ENCODE measurements at regions of chr6 and their contacts with region 1.

Region 1: GRCh38 chr6:150068720-150069648 is at the start of gene ULBP3:
- DNase-seq: peak; percentile 89
- ATAC-seq: peak; percentile 87
- H3K4me3 ChIP-seq: peak within 1 kb of the TSS; percentile 81 to 92
- H3K27ac ChIP-seq: peak within 1 kb of the TSS; percentile 53
- H3K4me1 ChIP-seq: peaks cover 20 to 49% of the 10 kb centered on the region in 2 experiments
- H3K27me3 ChIP-seq: no peaks in the 10 kb centered on the region
- CTCF ChIP-seq: peak in 2 of 3 experiments; percentile 60 to 72; a peak in 4 of 6 replicates
- POLR2A ChIP-seq: peak; percentile 83
- RAD21 ChIP-seq: no peak
- total RNA-seq, gene ULBP3: 18.4 TPM

Region 2: GRCh38 chr6:149934249-149935156 is 134.5 kb before region 1 on chr6:
- CTCF ChIA-PET with region 1: interaction called, 4 read pairs
- POLR2A ChIA-PET with region 1: no interaction called
- RAD21 ChIA-PET with region 1: no interaction called
- intact Hi-C with region 1: loop called (anchors 1 kb)
- DNase-seq: peak; percentile 76
- ATAC-seq: peak; percentile 67
- H3K4me3 ChIP-seq: no peak overlapping the region
- H3K27ac ChIP-seq: no peak overlapping the region
- H3K4me1 ChIP-seq: peaks cover 0 to 3% of the 10 kb centered on the region in 2 experiments; a peak in 1 of 4 replicates
- H3K27me3 ChIP-seq: no peaks in the 10 kb centered on the region
- CTCF ChIP-seq: peak; percentile 63 to 88 (median 87)
- POLR2A ChIP-seq: no peak
- RAD21 ChIP-seq: peak; percentile 96

Region 3: DNA sequence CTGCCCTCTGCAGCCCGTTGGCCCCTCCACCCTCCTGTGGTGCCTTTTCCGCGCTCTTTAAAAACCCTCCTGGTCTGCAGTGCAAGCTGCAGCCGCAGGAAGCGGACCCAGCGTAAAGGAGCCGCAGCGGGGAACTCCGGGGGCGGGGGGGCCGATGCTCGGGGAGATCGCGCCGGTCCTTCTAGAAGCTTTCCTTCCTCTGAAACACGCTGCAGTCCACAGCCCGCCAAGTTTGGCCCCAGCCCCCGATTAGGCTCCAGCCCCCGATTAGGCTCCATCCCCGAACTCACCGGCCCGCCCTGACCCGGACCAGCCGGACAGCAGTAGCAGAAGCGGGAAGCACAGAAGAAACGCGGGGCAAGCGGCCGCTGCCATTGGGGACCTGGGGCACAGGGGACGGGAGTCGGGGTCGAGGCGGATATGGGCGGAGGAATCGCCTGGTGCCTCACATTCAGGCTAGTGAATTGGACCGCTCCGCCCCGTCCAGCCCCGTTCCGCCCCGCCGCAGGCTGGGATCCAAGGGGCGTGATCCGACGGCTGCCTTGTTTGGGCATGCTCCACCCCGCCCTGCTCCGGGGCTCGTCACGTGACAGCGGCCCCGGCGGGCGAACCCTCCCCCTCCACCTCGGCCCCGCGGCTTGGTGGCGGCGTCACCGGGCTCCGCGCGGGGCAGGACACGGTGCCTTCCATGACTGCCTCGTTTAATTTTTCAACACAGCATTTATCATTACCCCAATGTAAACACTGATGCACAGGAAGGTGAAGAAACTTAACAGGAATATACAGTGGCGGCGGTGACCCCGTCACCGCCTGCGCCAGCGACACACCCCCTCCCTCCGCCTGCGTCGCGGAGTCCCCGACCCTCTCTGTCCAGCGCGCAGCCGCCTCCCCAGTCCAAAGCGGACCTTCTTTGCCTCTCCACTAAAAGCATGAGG is 63.9 kb before region 1 on chr6:
- CTCF ChIA-PET with region 1: interaction called, 3 read pairs
- POLR2A ChIA-PET with region 1: interaction called, 3 read pairs
- RAD21 ChIA-PET with region 1: no interaction called
- intact Hi-C with region 1: loop called (anchors 5 kb)
- DNase-seq: peak; percentile 81
- ATAC-seq: peak; percentile 93
- H3K4me3 ChIP-seq: peak overlapping the region; percentile 81 to 91
- H3K27ac ChIP-seq: peak overlapping the region; percentile 57
- H3K4me1 ChIP-seq: peaks cover 18 to 33% of the 10 kb centered on the region in 2 experiments
- H3K27me3 ChIP-seq: no peaks in the 10 kb centered on the region
- CTCF ChIP-seq: no peak
- POLR2A ChIP-seq: peak; percentile 36
- RAD21 ChIP-seq: no peak

Region 4: DNA sequence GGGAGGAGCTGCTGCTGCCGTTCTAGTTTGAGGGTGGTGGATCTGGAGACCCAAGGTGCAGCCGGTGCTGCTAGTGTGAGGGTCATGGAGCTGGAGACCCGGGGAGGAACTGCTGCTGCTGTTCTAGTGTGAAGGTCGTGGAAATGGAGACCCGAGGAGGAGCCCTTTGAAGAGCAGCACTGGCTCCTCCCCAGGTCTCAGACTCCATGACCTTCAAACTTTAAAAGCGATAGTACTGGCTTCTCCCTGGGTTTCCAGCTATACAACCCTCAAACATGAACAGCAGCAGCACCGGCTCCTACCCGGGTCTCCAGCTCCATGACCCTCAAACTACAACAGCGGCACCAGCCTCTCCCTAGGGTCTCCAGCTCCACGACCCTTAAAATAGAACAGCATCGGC is 15.5 kb before region 1 on chr6:
- CTCF ChIA-PET with region 1: interaction called, 11 read pairs
- POLR2A ChIA-PET with region 1: interaction called, 4 read pairs
- RAD21 ChIA-PET with region 1: no interaction called
- intact Hi-C with region 1: no loop called
- DNase-seq: no peak
- ATAC-seq: no peak
- H3K4me3 ChIP-seq: no peak overlapping the region
- H3K27ac ChIP-seq: no peak overlapping the region
- H3K4me1 ChIP-seq: no peaks in the 10 kb centered on the region
- H3K27me3 ChIP-seq: peaks cover 15% of the 10 kb centered on the region; the same call in 1 of the 2 replicates
- CTCF ChIP-seq: no peak
- POLR2A ChIP-seq: no peak
- RAD21 ChIP-seq: no peak

Region 5: GRCh38 chr6:150079604-150080003 is 10.6 kb after region 1 on chr6:
- CTCF ChIA-PET with region 1: interaction called, 48 read pairs
- POLR2A ChIA-PET with region 1: interaction called, 4 read pairs
- RAD21 ChIA-PET with region 1: interaction called in 1 of 2 experiments, 4 read pairs
- intact Hi-C with region 1: no loop called
- DNase-seq: no peak
- ATAC-seq: no peak
- H3K4me3 ChIP-seq: no peak overlapping the region
- H3K27ac ChIP-seq: no peak overlapping the region
- H3K4me1 ChIP-seq: peaks cover 2 to 20% of the 10 kb centered on the region in 2 experiments; a peak in 3 of 4 replicates
- H3K27me3 ChIP-seq: no peaks in the 10 kb centered on the region
- CTCF ChIP-seq: no peak
- POLR2A ChIP-seq: no peak
- RAD21 ChIP-seq: no peak

Region 6: GRCh38 chr6:150220634-150221551 is 151.9 kb after region 1 on chr6:
- CTCF ChIA-PET with region 1: no interaction called
- POLR2A ChIA-PET with region 1: no interaction called
- RAD21 ChIA-PET with region 1: no interaction called
- intact Hi-C with region 1: no loop called
- DNase-seq: no peak
- ATAC-seq: no peak
- H3K4me3 ChIP-seq: no peak overlapping the region
- H3K27ac ChIP-seq: no peak overlapping the region
- H3K4me1 ChIP-seq: no peaks in the 10 kb centered on the region
- H3K27me3 ChIP-seq: no peaks in the 10 kb centered on the region
- CTCF ChIP-seq: no peak
- POLR2A ChIP-seq: no peak
- RAD21 ChIP-seq: no peak

Region 7: GRCh38 chr6:150395398-150396009 is 326.5 kb after region 1 on chr6:
- CTCF ChIA-PET with region 1: interaction called, 37 read pairs
- POLR2A ChIA-PET with region 1: interaction called, 8 read pairs
- RAD21 ChIA-PET with region 1: no interaction called
- intact Hi-C with region 1: loop called (anchors 1 kb)
- DNase-seq: peak; percentile 49
- ATAC-seq: peak; percentile 97
- H3K4me3 ChIP-seq: no peak overlapping the region
- H3K27ac ChIP-seq: no peak overlapping the region
- H3K4me1 ChIP-seq: peaks cover 0 to 3% of the 10 kb centered on the region in 2 experiments; a peak in 1 of 4 replicates
- H3K27me3 ChIP-seq: no peaks in the 10 kb centered on the region
- CTCF ChIP-seq: peak; percentile 69 to 89 (median 83)
- POLR2A ChIP-seq: no peak
- RAD21 ChIP-seq: peak; percentile 95

Region 8: GRCh38 chr6:150417899-150418826 is 349.2 kb after region 1 on chr6:
- CTCF ChIA-PET with region 1: interaction called, 6 read pairs
- POLR2A ChIA-PET with region 1: interaction called, 3 read pairs
- RAD21 ChIA-PET with region 1: interaction called in 1 of 2 experiments, 3 read pairs
- intact Hi-C with region 1: loop called (anchors 5 kb)
- DNase-seq: peak; percentile 88
- ATAC-seq: peak; percentile 83
- H3K4me3 ChIP-seq: peak overlapping the region; percentile 13 to 50
- H3K27ac ChIP-seq: peak overlapping the region; percentile 40; the same call in 1 of the 2 replicates
- H3K4me1 ChIP-seq: peaks cover 13 to 20% of the 10 kb centered on the region in 2 experiments
- H3K27me3 ChIP-seq: no peaks in the 10 kb centered on the region
- CTCF ChIP-seq: peak; percentile 80 to 88 (median 83)
- POLR2A ChIP-seq: no peak
- RAD21 ChIP-seq: peak; percentile 96

Measured in HCT116 (cell line).